Right cardiac atrium (tissue), 5 donors: ENCODE measurements at regions of chr10 and their contacts with region 1.

Region 1: DNA sequence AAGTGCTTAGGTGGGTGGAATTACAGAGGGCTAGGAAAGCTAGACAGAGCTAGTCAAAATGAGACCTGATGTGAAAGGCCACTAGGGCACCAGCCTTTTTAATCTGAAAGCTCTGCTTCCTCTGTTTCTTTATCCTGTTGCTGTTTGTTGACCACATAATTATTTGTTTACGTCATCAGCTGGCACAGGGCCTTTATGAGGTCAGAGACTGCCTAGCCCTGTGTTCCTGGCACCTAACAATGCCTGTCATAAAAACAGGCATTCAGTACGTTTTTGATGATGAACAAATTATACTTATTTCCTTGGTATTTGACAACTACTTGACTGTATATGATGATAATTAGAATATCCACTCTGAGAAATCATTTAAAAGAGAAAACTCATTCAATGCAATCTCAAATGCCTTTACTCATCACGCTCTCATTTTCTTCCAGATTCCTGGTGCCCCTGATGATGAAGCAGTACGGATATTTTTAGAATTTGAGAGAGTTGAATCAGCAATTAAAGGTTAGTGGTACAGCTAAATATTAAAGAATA is 26.0 kb downstream of the RBM17 start:
- DNase-seq: peak in 1 of 3 donors; percentile 64
- ATAC-seq: no peak
- H3K4me3 ChIP-seq: no peak overlapping the region
- H3K27ac ChIP-seq: peak overlapping the region; percentile 56
- H3K4me1 ChIP-seq: peaks cover 5% of the 10 kb centered on the region
- H3K27me3 ChIP-seq: no peaks in the 10 kb centered on the region

Region 2: GRCh38 chr10:6144406-6145165 is 29.7 kb after region 1 on chr10:
- intact Hi-C with region 1: loop called in 1 of 4 experiments (anchors 5 kb)
- DNase-seq: peak; percentile 94 to 98 (median 96)
- ATAC-seq: peak; percentile 96
- H3K4me3 ChIP-seq: peak overlapping the region; percentile 73
- H3K27ac ChIP-seq: peak overlapping the region; percentile 65
- H3K4me1 ChIP-seq: no peaks in the 10 kb centered on the region
- H3K27me3 ChIP-seq: no peaks in the 10 kb centered on the region

Region 3: GRCh38 chr10:6202684-6203330 is 87.9 kb after region 1 on chr10 and contains the start of gene PFKFB3:
- intact Hi-C with region 1: loop called in 2 of 4 experiments (anchors 5 to 10 kb)
- DNase-seq: peak; percentile 96 to 99 (median 98)
- ATAC-seq: peak; percentile 96
- H3K4me3 ChIP-seq: peak within 1 kb of the TSS; percentile 63
- H3K27ac ChIP-seq: peak within 1 kb of the TSS; percentile 53
- H3K4me1 ChIP-seq: peaks cover 9% of the 10 kb centered on the region
- H3K27me3 ChIP-seq: no peaks in the 10 kb centered on the region
- total RNA-seq, gene PFKFB3: 10.5 to 15.1 (median 11.7) TPM